ENCODE measurements at regions of chr4 and their contacts with region 1.

Region 1: GRCh38 chr4:56977321-56978012 is at the start of gene NOA1:
- H3K4me3 Mint-ChIP-seq: peak within 1 kb of the TSS; percentile 93
- H3K27ac Mint-ChIP-seq: peak within 1 kb of the TSS; percentile 96
- H3K4me1 Mint-ChIP-seq: peaks cover 39% of the 10 kb centered on the region
- H3K27me3 Mint-ChIP-seq: no peaks in the 10 kb centered on the region

Region 2: DNA sequence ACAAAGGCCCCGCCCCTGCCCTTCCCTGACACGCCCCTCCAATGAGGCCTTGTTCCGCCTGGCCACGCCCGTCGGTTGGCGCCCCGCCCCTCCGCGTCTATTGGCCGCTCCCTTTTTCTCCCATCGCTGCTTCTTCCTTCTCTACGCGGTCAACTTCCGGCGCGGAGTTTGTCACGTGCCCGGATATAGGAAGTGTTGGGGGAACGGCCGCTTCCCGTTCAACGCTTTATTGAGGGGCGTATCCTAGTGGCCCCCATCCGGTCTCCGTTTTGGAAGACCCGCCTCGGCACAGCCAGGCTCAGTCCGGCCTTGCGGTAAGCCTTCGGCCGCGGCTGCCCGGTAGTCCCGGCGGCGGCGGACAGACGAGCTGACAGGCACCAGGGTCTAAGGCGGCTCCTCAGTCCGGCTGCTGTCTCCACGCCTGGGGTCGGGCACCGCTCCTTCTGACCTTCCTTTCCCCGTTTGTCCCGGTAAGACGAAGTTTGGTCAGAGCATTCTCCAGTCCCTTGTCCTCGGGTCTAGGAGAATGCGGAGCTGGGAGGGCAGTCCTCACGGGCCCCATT is 1123.9 kb before region 1 on chr4 and contains the start of gene EXOC1:
- intact Hi-C with region 1: loop called (anchors 5 kb)
- H3K4me3 Mint-ChIP-seq: no peak within 1 kb of the TSS
- H3K27ac Mint-ChIP-seq: peak within 1 kb of the TSS; percentile 94
- H3K4me1 Mint-ChIP-seq: no peaks in the 10 kb centered on the region
- H3K27me3 Mint-ChIP-seq: peaks cover 8% of the 10 kb centered on the region

Region 3: DNA sequence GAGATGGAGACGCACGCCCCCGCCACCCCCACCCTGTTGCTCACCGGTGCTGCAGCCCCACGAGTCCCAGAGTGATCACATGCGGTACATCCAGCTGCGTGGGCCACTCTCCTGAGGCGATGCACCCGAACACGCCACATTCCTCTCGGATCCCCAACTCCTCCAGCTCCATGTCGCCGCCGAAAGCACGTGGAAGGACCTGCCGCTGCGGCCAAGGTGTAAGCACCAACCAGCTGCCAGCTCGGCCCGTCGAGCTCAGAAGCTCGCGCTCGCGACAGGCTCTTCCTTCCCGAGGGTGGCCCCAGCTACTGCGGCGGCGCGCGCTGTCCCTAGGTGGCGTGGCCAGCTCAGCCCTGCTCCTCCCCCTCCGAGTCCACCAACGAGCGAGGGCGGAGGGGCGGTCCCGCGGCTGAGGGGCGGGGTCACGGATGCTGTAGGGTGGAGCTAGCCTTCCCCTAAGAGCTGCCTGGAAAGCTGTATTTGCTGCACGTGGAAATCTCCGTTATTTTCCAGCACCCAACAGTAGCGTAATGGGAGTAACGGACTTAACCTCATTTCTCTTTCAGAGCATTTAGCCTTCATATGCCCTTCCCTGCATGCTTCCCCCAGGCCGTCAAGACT is 542.1 kb before region 1 on chr4 and contains the start of gene PPAT:
- intact Hi-C with region 1: loop called (anchors 2 kb)
- H3K4me3 Mint-ChIP-seq: peak within 1 kb of the TSS; percentile 78
- H3K27ac Mint-ChIP-seq: peak within 1 kb of the TSS; percentile 89
- H3K4me1 Mint-ChIP-seq: peaks cover 35% of the 10 kb centered on the region
- H3K27me3 Mint-ChIP-seq: no peaks in the 10 kb centered on the region

Region 4: DNA sequence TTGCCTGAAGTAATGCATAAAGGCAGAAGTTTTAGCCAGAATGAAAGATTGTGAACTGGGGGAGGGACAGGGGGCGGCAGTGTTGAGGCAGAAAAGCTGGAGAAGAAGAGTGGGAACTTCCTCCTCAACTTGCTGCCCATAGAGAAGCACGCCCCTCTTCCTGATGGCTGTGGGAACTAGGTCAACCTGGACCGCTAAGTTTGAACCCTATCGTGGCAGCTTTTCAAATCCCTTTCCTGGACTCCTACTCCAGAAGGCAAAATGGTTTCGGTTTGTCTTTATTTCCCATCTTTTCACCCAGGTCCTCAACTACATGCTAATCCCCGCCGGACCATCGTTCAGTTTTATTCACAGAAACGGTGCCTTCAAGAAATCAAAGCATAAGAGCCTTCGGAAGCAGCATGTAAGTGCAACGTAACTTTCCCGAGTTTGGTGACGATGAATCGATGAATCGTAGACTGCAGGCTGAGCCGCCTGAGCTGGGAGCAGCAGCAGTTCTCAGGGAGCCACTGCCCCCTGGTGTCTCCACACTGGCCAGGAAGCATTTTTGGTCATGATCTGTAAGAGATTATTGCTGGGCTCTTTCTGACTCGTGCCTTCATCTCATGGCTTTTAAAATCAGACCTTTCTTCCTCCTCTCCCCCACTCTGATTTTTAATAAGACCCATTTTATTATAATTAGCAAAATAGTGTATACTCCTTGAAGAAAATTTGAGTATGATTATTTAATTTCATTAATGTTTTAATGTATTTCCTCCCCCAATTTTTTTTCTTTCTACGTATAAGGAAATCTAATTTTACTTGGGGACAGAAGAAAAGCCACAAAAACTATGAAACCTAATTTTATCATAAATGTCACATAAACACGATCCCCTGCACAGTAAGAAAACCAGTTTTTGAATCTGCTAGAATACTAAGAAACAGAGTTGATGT is 177.4 kb before region 1 on chr4:
- intact Hi-C with region 1: no loop called
- H3K4me3 Mint-ChIP-seq: peak overlapping the region; percentile 90
- H3K27ac Mint-ChIP-seq: peak overlapping the region; percentile 83
- H3K4me1 Mint-ChIP-seq: peaks cover 22% of the 10 kb centered on the region
- H3K27me3 Mint-ChIP-seq: no peaks in the 10 kb centered on the region